ENCODE measurements at regions of chr4 and their contacts with region 1.

Region 1: DNA sequence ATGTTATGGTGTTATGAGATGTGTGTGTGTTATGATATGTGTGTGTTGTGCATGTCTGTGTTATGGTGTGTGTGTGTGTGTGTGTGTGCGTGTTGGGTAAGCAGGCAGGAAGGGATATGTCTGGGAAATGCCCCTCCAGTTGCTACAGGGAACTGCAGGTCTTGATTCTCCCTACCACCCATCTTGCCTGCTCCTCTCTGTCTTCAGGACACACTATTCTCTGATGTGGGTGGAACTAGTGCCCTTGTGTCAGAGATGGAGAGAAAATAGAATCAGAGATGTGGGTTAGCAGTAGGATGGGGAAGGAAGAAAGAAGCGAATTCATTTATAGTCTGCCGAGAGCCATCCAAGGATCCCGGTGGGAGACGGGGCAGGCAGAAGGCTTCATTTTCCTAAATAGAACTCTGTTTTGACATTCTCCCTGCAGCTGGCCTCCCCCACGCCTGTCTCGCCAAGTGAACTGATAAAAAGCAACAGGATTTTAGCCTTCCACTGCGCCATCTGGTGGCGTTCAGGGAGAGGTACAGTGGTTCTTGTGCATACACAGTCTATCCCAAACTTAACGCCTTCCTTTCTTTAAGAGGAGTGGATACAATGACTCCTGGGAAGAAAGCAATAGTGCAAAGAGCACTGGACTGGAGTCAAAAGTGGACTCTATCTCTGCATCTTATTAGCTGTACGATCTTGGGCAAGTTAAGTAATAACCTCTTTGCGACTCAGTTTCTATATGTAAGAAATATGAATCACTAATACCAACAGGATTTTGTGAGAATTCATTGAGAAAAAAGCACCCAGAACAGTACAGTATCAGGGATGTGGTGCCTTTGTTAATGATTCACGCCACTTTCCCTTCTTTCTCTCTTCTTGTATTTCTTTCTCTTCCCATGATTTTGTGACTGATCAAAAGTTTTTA is 14.1 kb upstream of the MGST2 start:
- DNase-seq: peak; percentile 76 to 86
- ATAC-seq: peak; percentile 74 to 94 (median 88)
- H3K4me3 ChIP-seq: peak overlapping the region in 2 of 10 donors; percentile 24 to 32
- H3K27ac ChIP-seq: peak overlapping the region in 1 of 10 donors; percentile 36
- H3K4me1 ChIP-seq: peaks cover 0 to 13% (median 6%) of the 10 kb centered on the region in 9 donors
- H3K27me3 ChIP-seq: no peaks in the 10 kb centered on the region
- CTCF ChIP-seq: peak; percentile 82 to 98 (median 93)

Region 2: GRCh38 chr4:139030614-139031235 is 620.8 kb before region 1 on chr4:
- intact Hi-C with region 1: loop called in 2 of 10 experiments (anchors 5 to 10 kb)
- DNase-seq: peak in 1 of 2 donors; percentile 80
- ATAC-seq: peak in 7 of 8 donors; percentile 27 to 70 (median 44)
- H3K4me3 ChIP-seq: no peak overlapping the region
- H3K27ac ChIP-seq: peak overlapping the region in 1 of 10 donors; percentile 82
- H3K4me1 ChIP-seq: peaks cover 0 to 41% (median 9%) of the 10 kb centered on the region in 9 donors
- H3K27me3 ChIP-seq: no peaks in the 10 kb centered on the region
- CTCF ChIP-seq: peak; percentile 60 to 87 (median 81)

Region 3: GRCh38 chr4:139042981-139043460 is 608.5 kb before region 1 on chr4:
- intact Hi-C with region 1: loop called in 2 of 10 experiments (anchors 10 kb)
- DNase-seq: no peak
- ATAC-seq: peak; percentile 51 to 88 (median 74)
- H3K4me3 ChIP-seq: no peak overlapping the region
- H3K27ac ChIP-seq: peak overlapping the region in 1 of 10 donors; percentile 29
- H3K4me1 ChIP-seq: peaks cover 0 to 25% (median 13%) of the 10 kb centered on the region in 9 donors
- H3K27me3 ChIP-seq: no peaks in the 10 kb centered on the region
- CTCF ChIP-seq: no peak

Region 4: DNA sequence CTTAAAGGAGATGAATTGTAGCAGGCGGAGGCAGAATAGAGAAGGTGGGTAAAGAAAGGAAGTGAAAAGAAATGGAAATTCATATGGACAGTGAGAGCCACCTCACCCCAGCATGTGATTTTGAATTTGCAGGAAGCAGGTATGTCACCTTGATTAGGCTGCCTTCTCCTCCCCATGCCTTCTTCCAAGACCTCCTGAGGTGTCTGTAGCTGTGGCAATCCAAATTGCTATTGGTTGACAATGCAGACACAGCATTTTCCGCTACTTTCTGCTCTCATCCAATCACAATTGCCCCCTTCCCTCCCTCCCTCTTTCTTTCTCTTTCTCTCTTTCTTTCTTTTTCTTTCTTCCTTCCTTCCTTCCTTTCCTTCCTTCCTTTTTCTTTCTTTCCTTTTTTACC is 159.1 kb before region 1 on chr4:
- intact Hi-C with region 1: loop called in 5 of 10 experiments (anchors 5 to 10 kb)
- DNase-seq: no peak
- ATAC-seq: no peak
- H3K4me3 ChIP-seq: no peak overlapping the region
- H3K27ac ChIP-seq: no peak overlapping the region
- H3K4me1 ChIP-seq: peaks cover 0 to 5% (median 0%) of the 10 kb centered on the region in 9 donors
- H3K27me3 ChIP-seq: no peaks in the 10 kb centered on the region
- CTCF ChIP-seq: no peak

Region 5: GRCh38 chr4:139501927-139502899 is 149.3 kb before region 1 on chr4:
- intact Hi-C with region 1: loop called in 5 of 10 experiments (anchors 5 to 10 kb)
- DNase-seq: no peak
- ATAC-seq: no peak
- H3K4me3 ChIP-seq: no peak overlapping the region
- H3K27ac ChIP-seq: no peak overlapping the region
- H3K4me1 ChIP-seq: peaks cover 0 to 20% (median 4%) of the 10 kb centered on the region in 9 donors
- H3K27me3 ChIP-seq: no peaks in the 10 kb centered on the region
- CTCF ChIP-seq: no peak

Region 6: DNA sequence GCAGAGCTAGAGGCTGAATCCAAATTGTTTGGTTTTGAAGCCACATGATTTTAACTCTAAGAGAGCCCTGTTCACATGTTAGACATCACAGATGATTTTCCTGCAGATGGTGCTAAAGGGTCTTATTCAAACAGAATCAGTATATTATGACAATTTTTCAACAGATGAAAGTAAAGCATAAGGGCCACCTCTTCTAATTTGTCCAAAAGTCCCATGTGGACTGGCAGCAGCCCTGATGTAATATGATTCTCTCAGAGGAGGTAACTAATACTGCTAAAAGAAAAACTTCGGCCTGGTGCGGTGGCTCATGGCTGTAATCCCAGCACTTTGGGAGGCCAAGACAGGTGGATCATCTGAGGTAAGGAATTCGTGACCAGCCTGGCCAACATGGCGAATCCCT is 69.5 kb before region 1 on chr4:
- intact Hi-C with region 1: no loop called
- DNase-seq: no peak
- ATAC-seq: no peak
- H3K4me3 ChIP-seq: no peak overlapping the region
- H3K27ac ChIP-seq: no peak overlapping the region
- H3K4me1 ChIP-seq: no peaks in the 10 kb centered on the region
- H3K27me3 ChIP-seq: no peaks in the 10 kb centered on the region
- CTCF ChIP-seq: peak in 1 of 9 donors; percentile 15

Region 7: GRCh38 chr4:139603576-139604387 is 47.8 kb before region 1 on chr4:
- intact Hi-C with region 1: loop called in 9 of 10 experiments (anchors 1 to 5 kb)
- DNase-seq: peak in 1 of 2 donors; percentile 56
- ATAC-seq: peak in 6 of 8 donors; percentile 48 to 70 (median 60)
- H3K4me3 ChIP-seq: no peak overlapping the region
- H3K27ac ChIP-seq: no peak overlapping the region
- H3K4me1 ChIP-seq: peaks cover 0 to 19% (median 6%) of the 10 kb centered on the region in 9 donors
- H3K27me3 ChIP-seq: no peaks in the 10 kb centered on the region
- CTCF ChIP-seq: peak; percentile 48 to 84 (median 72)

Region 8: GRCh38 chr4:139633661-139634060 is 17.9 kb before region 1 on chr4:
- intact Hi-C with region 1: no loop called
- DNase-seq: peak; percentile 26 to 34
- ATAC-seq: peak; percentile 90 to 97 (median 94)
- H3K4me3 ChIP-seq: peak overlapping the region in 9 of 10 donors; percentile 17 to 53 (median 48)
- H3K27ac ChIP-seq: peak overlapping the region in 8 of 10 donors; percentile 10 to 73 (median 44)
- H3K4me1 ChIP-seq: peaks cover 0 to 7% (median 0%) of the 10 kb centered on the region in 9 donors
- H3K27me3 ChIP-seq: no peaks in the 10 kb centered on the region
- CTCF ChIP-seq: peak; percentile 32 to 76 (median 65)